Ascending aorta (tissue), 2 donors: ENCODE measurements at regions of chr1 and their contacts with region 1.

Region 1: GRCh38 chr1:167220537-167221125 is at the start of gene POU2F1:
- DNase-seq: peak; percentile 93 to 99
- H3K4me3 ChIP-seq: peak within 1 kb of the TSS; percentile 75 to 97
- H3K27ac ChIP-seq: peak within 1 kb of the TSS; percentile 93 to 98
- H3K4me1 ChIP-seq: peaks cover 0 to 7% of the 10 kb centered on the region in 2 donors
- H3K27me3 ChIP-seq: no peaks in the 10 kb centered on the region
- CTCF ChIP-seq: peak; percentile 70 to 77 (median 71)
- total RNA-seq, gene POU2F1: 3.0 TPM

Region 2: DNA sequence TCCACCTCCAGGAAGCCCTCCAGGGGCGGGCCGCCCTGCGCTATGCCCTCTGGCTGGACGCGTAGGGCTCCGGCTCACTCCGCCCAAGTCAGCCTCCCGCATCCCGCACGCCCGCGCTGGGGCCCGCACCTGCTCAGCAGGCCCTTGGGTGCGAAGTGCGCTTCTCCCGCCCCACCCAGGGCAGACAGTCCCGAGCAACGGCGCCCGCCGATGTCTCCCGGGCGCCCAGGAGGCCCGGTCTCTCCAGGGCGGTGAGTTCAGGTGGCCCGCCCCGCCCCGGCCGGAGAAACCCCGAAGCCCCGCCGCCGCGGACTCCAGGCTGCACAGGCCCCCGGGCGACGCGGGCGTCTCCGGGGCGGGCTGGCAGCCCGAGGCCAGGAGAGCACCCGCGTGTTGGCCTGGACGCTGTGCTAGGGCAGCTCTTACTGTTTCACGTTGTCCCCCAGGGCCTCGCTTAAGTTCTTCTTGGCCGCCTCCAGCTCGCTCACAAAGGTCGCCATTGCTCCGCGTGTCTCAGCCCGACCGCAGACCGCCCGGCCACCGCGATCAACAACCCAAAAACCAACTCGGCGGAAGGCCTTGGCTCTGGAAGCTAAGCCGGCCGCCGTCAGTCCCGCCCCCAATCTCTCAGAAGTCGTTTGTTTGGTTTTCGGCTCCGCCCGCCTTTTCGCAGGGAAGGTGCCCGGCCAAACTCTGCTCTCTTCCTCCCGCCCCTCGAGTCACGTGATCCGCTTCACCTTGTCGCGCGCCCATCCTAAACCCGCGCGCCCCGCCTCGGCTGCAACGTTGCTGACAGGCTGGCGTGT is 344.7 kb before region 1 on chr1 and contains the start of gene TADA1:
- intact Hi-C with region 1: loop called (anchors 2 kb)
- DNase-seq: peak; percentile 93 to 99
- H3K4me3 ChIP-seq: peak within 1 kb of the TSS; percentile 78 to 82
- H3K27ac ChIP-seq: peak within 1 kb of the TSS; percentile 84 to 88
- H3K4me1 ChIP-seq: peaks cover 5 to 7% of the 10 kb centered on the region in 2 donors
- H3K27me3 ChIP-seq: no peaks in the 10 kb centered on the region
- CTCF ChIP-seq: peak in 1 of 3 experiments; percentile 24
- total RNA-seq, gene TADA1: 12.8 TPM

Region 3: GRCh38 chr1:167105271-167106118 is 115.1 kb before region 1 on chr1:
- intact Hi-C with region 1: no loop called
- DNase-seq: no peak
- H3K4me3 ChIP-seq: no peak overlapping the region
- H3K27ac ChIP-seq: no peak overlapping the region
- H3K4me1 ChIP-seq: no peaks in the 10 kb centered on the region
- H3K27me3 ChIP-seq: no peaks in the 10 kb centered on the region
- CTCF ChIP-seq: no peak